Sigmoid colon (tissue), 7 donors: ENCODE measurements at regions of chr5 and their contacts with region 1.

Region 1: DNA sequence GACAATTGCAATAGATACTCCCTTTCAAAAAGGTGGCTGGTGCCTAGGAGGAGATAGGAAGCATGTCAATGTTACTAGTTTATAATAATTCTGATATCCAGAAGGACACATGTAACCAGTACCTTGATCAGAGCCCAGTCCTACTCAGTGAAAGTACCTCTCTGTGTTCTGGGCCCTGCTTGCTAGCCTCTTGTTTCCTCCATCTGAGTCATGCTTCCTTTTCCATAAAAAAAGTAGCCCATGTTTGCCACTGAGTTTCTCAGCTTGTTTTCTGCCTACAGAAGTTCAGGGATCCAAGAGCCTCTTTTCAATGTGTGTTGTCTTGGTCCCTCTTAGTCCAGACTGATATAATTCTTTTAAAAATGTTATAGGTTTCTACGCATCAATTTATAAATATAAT is 149.0 kb downstream of the SSBP2 start:
- DNase-seq: no peak
- H3K4me3 ChIP-seq: no peak overlapping the region
- H3K27ac ChIP-seq: no peak overlapping the region
- H3K4me1 ChIP-seq: no peaks in the 10 kb centered on the region
- H3K27me3 ChIP-seq: no peaks in the 10 kb centered on the region
- CTCF ChIP-seq: no peak
- EP300 ChIP-seq: no peak
- POLR2A ChIP-seq: no peak

Region 2: DNA sequence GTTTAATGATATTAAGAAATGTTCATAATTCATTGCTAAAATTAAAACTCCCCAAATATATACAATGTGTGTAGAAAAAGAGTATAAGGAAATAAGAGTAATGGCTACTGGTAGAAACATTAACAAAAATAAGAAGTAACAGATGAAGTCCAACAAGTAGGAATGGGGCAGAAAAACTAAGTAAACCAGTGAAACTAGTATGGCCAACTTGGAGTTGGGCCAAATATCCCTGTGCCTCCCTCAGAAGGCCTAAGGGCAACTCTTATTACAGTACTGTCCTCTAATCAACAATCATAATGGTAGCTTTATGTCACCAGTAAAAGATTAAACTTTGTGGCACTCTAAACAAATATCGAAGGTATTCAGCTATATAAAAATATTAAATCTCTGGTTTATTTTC is 55.5 kb after region 1 on chr5:
- intact Hi-C with region 1: loop called (anchors 10 kb)
- DNase-seq: no peak
- H3K4me3 ChIP-seq: no peak overlapping the region
- H3K27ac ChIP-seq: no peak overlapping the region
- H3K4me1 ChIP-seq: peaks cover 0 to 9% (median 1%) of the 10 kb centered on the region in 4 donors
- H3K27me3 ChIP-seq: no peaks in the 10 kb centered on the region
- CTCF ChIP-seq: no peak
- EP300 ChIP-seq: no peak
- POLR2A ChIP-seq: no peak

Region 3: DNA sequence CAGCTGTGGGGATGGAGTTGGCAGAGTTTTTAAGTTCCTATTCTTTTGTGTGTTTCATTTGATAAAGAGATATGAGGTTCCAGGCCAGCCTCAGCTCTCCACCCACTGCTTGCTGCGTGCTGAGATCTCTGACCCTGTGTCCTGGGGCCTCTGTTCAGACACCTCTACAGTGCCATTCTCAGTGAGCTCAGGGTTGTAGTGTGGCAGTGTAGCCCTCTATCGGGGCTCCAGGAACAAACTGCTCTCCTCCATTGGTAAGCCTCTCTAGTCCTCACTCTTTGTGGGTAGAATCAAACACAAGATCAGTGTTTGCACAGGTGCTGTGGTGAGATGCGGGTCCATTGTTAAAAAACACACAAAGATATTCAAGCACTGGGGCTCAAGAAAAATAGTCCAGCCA is 1062.8 kb after region 1 on chr5:
- intact Hi-C with region 1: no loop called
- DNase-seq: no peak
- H3K4me3 ChIP-seq: no peak overlapping the region
- H3K27ac ChIP-seq: no peak overlapping the region
- H3K4me1 ChIP-seq: no peaks in the 10 kb centered on the region
- H3K27me3 ChIP-seq: no peaks in the 10 kb centered on the region
- CTCF ChIP-seq: no peak
- EP300 ChIP-seq: no peak
- POLR2A ChIP-seq: no peak